Right ventricle myocardium superior (tissue), 1 donor: ENCODE measurements at regions of chr18 and their contacts with region 1.

Region 1: DNA sequence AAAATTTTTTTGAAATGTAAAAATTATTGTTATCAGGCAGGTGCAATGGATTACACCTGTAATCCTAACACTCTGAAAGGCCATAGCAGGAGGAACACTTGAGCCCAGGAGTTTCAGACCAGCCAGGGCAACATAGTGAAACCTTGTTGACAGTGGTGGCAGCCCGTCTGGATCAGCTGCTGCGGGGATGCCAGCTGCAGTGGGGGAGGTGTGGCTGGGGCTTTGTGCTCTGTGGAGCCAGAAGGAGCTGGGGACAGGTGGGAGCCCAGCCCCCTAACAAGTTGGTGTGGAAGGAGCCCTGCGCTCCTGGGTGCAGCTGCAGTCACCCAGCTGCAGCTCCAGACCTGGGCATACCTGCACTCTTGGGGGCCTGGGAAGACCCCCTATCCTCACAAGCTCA is 182.4 kb upstream of the MC4R start:
- DNase-seq: no peak
- ATAC-seq: no peak

Region 2: GRCh38 chr18:59988098-59988706 is 566.8 kb before region 1 on chr18:
- intact Hi-C with region 1: loop called (anchors 5 kb)
- DNase-seq: no peak
- ATAC-seq: no peak

Region 3: DNA sequence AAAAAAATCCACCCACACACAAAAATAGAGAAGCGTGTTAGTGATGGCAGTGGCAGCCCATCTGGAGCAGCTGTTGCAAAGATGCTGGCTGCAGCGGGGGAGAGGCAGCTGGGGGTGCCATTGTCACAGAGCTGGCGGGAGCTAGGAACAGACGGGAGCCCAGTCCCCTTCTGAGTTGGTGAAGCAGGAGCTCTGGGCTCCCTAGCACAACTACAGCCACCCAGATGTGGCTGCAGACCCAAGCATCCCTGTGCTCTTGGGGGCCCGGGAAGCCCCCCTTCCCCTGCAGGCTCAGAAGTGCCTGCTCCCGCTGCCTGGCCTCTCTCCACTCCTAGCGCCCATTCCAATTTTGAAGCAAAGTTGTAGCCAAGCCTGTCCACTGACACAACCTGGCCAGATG is 184.2 kb after region 1 on chr18:
- intact Hi-C with region 1: no loop called
- DNase-seq: no peak
- ATAC-seq: no peak